Right cardiac atrium (tissue), 5 donors: ENCODE measurements at regions of chr2 and their contacts with region 1.

Region 1: GRCh38 chr2:210195101-210195852 is 24.1 kb upstream of the KANSL1L start:
- DNase-seq: no peak
- ATAC-seq: no peak
- H3K4me3 ChIP-seq: peak overlapping the region; percentile 52
- H3K27ac ChIP-seq: no peak overlapping the region
- H3K4me1 ChIP-seq: no peaks in the 10 kb centered on the region
- H3K27me3 ChIP-seq: no peaks in the 10 kb centered on the region

Region 2: GRCh38 chr2:210072922-210073509 is 122.3 kb before region 1 on chr2:
- intact Hi-C with region 1: loop called in 2 of 4 experiments (anchors 10 kb)
- DNase-seq: no peak
- ATAC-seq: no peak
- H3K4me3 ChIP-seq: no peak overlapping the region
- H3K27ac ChIP-seq: no peak overlapping the region
- H3K4me1 ChIP-seq: no peaks in the 10 kb centered on the region
- H3K27me3 ChIP-seq: no peaks in the 10 kb centered on the region

Region 3: GRCh38 chr2:210309548-210310233 is 114.4 kb after region 1 on chr2:
- intact Hi-C with region 1: no loop called
- DNase-seq: no peak
- ATAC-seq: no peak
- H3K4me3 ChIP-seq: no peak overlapping the region
- H3K27ac ChIP-seq: no peak overlapping the region
- H3K4me1 ChIP-seq: no peaks in the 10 kb centered on the region
- H3K27me3 ChIP-seq: no peaks in the 10 kb centered on the region

Region 4: DNA sequence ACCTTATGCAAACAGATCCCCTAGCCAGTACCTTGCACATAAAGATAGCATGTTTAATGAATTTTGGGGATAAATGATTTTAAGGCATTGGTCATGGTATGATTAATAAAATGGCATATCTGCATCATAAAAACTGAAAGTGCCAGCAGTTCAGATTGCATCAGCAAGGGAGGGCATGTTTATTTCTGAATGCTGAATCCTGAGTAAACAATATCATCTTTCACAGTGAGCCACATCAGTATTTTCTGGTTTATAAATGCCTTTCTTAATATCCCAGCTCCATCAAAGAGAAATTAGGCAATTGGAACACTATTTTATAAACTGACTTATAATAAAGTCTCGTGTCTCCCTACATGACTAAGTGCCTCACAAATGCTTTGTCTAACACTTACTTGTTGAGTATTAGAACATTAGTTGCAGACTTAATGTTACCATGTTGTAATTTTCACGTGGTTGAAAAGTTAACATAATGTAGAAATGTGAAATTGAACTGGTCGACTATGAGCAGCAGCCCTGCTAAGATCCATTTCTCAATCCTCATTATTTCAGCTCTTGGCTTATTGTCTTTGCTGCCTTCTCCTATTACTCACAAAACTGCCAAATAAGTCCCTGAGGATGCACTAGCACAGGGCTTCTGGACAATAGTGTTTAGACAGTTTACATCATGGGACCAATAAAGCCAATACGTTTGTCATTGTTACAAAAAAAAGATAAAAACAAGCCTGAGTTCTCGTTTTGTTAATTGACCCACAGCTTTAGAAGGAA is 233.3 kb after region 1 on chr2:
- intact Hi-C with region 1: no loop called
- DNase-seq: no peak
- ATAC-seq: peak in 1 of 2 donors; percentile 26
- H3K4me3 ChIP-seq: no peak overlapping the region
- H3K27ac ChIP-seq: no peak overlapping the region
- H3K4me1 ChIP-seq: no peaks in the 10 kb centered on the region
- H3K27me3 ChIP-seq: no peaks in the 10 kb centered on the region